AG04449 (cell line): ENCODE measurements at regions of chr5 and their contacts with region 1.

Region 1: DNA sequence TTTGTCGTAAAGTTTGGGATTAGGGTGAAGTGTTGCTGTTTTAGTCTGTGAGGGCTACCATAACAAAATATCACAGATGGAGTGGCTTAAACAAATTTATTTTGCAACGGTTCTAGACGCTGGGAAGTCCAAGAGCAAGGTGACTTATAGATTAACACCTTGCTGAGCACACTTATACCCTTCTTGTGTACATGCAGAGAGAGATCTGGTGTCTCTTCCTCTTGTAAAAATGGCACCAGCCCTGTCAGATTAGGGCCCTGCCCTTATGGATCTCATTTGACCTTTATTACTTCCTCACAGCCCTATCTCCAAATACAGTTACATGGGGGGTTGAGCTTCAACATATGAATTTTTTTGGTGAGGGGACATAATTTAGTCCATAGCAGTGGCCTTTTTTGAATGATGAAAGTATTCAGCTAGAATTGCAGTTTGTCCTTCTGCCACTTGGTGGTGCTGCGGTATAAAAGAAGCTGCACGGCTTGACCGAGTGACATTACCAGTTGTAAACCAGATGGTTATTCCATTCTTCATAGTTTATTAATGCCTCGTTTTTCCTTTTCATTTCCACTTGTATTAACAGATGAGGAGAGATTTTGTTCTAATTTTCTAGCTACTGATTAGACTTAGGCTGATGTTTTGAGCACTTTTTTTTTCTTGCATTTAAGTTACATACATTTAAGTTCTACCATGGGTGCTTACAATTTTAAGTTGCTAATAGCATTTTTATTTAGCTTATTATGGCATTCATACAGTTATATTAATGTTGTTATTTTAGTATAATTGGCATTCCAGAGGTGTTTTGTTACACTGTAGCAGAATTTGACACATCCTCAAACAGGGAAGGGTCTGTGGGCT is 19.4 kb downstream of the DCP2 start:
- DNase-seq: peak; percentile 26
- H3K4me3 ChIP-seq: no peak overlapping the region
- CTCF ChIP-seq: peak; percentile 78

Region 2: DNA sequence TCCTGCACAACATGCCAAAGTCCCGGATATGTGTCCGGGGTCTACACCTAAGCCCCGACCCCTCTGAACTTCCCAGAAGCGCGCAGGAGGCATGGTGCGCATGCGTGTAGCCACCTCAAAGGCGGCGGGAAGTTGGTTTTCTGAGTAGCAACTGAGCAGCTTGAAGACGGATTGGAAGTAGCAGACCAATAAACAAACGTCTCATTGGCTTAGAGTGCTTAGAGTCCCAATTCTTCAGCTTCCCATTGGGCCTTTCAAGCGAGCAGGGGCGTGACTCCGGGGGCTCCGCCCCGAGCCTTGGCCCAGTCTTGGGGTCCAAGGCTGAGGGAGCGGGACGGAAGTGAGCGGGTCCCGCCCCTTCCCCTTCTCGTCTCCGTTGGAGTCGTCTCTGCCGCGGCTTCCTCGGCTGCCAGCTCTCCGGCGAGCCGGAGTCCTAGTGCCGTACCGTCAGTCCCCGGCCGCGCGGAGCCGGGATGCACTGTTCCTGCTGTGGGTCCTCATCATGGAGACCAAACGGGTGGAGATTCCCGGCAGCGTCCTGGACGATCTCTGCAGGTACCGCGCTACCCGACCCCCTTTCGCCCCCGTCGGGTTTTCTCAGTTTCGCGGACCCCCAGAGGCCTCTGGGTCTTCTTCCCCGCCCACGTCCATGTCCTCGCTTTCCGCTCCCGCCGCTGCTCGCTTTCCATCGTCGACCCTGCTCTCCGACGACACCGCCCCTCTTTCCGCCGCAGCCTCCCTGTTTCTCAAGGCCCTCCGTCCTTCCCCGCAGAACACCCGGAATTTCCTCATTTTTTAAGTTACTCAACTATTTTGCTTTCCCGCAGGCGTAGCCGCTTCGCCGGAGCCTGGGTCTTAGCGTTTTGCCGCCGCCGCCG is 19.3 kb before region 1 on chr5 and contains the start of gene DCP2:
- CTCF ChIA-PET with region 1: interaction called, 15 read pairs
- POLR2A ChIA-PET with region 1: no interaction called
- DNase-seq: peak; percentile 97
- H3K4me3 ChIP-seq: peak within 1 kb of the TSS; percentile 85
- CTCF ChIP-seq: no peak

Region 3: DNA sequence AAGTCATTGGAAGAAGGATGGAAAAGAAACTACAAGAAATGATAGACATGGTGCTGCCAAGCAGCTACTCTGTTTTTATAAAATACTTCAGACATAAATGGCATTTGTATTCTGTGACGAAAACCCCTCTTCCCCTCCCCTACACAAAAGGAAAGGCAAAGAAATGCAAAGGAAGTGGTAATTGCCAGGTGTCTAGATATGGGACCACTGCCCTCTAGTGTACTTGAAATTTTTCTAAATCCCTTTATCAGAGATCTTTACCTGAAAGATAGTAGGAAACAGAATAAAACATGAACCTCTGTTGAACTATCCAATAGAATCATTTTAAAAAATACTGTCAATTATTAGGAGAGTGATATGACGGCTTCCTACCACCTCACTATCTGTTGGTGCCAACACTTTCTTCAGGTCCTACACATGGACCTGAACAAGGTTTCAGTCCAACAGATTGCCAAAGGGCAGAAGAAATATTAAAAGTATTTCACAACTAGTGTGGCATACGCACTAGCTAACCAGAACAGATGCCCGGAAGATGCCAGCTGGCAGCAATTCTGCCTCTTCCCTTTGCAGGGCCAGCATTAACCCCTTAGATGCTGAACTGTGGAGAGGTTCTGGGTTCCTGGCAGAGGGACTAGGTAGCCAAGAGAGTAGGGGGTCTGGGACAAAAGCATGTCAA is 334.7 kb after region 1 on chr5:
- CTCF ChIA-PET with region 1: interaction called, 34 read pairs
- POLR2A ChIA-PET with region 1: no interaction called
- DNase-seq: no peak
- H3K4me3 ChIP-seq: no peak overlapping the region
- CTCF ChIP-seq: peak; percentile 10

Region 4: GRCh38 chr5:113378959-113379541 is 383.1 kb after region 1 on chr5:
- CTCF ChIA-PET with region 1: interaction called, 21 read pairs
- POLR2A ChIA-PET with region 1: no interaction called
- DNase-seq: peak; percentile 3
- H3K4me3 ChIP-seq: no peak overlapping the region
- CTCF ChIP-seq: peak; percentile 71

Region 5: GRCh38 chr5:113546703-113547183 is 550.8 kb after region 1 on chr5:
- CTCF ChIA-PET with region 1: interaction called, 15 read pairs
- POLR2A ChIA-PET with region 1: no interaction called
- DNase-seq: peak; percentile 31
- H3K4me3 ChIP-seq: no peak overlapping the region
- CTCF ChIP-seq: no peak